ENCODE measurements at regions of chr15 and their contacts with region 1.

Region 1: DNA sequence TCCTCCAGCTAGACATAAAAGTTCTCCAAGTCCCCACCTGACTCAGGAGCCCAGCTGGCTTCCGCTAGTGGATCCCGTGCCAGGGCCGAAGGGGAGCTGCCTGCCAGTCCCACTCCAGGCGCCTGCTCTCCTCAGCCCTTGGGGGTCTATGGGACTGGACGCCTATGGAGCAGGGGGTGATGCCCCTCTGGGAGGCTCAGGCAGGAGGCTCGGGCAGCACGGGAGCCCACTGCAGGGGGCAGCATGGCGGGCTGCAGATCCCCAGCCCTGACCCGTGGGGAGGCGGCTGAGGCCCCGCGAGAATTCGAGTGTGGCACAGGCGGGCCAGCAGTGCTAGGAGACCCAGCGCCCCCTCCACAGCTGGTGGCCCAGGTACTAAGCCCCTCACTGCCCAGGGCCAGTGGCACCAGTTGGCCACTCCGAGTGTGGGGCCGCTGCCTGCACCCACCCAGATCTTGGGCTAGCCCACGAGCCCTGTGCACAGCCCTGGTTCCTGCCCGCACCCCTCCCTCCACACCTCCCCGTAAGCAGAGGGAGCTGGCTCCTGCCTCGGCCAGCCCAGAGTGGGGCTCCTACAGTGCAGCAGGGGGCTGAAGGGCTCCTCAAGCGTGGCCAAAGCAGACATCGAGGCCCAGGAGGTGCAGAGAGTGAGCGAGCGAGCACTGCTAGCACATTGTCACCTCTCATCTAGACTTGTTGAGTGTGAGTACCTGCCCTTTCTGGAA is 221.3 kb upstream of the NSMCE3 start:
- DNase-seq: no peak
- ATAC-seq: no peak
- H3K4me3 ChIP-seq: no peak overlapping the region
- H3K27ac ChIP-seq: no peak overlapping the region
- H3K4me1 ChIP-seq: no peaks in the 10 kb centered on the region
- H3K27me3 ChIP-seq: no peaks in the 10 kb centered on the region
- CTCF ChIP-seq: no peak

Region 2: GRCh38 chr15:29511663-29512062 is 20.8 kb after region 1 on chr15:
- CTCF ChIA-PET with region 1: no interaction called
- POLR2A ChIA-PET with region 1: no interaction called
- in situ Hi-C with region 1: no loop called
- intact Hi-C with region 1: loop called (anchors 2 kb)
- DNase-seq: no peak
- ATAC-seq: no peak
- H3K4me3 ChIP-seq: no peak overlapping the region
- H3K27ac ChIP-seq: no peak overlapping the region
- H3K4me1 ChIP-seq: no peaks in the 10 kb centered on the region
- H3K27me3 ChIP-seq: no peaks in the 10 kb centered on the region
- CTCF ChIP-seq: no peak

Region 3: GRCh38 chr15:29533667-29534066 is 42.8 kb after region 1 on chr15:
- CTCF ChIA-PET with region 1: no interaction called
- POLR2A ChIA-PET with region 1: no interaction called
- in situ Hi-C with region 1: no loop called
- intact Hi-C with region 1: no loop called
- DNase-seq: no peak
- ATAC-seq: no peak
- H3K4me3 ChIP-seq: no peak overlapping the region
- H3K27ac ChIP-seq: no peak overlapping the region
- H3K4me1 ChIP-seq: no peaks in the 10 kb centered on the region
- H3K27me3 ChIP-seq: no peaks in the 10 kb centered on the region
- CTCF ChIP-seq: no peak

Region 4: GRCh38 chr15:29568838-29569532 is 78.1 kb after region 1 on chr15:
- CTCF ChIA-PET with region 1: no interaction called
- POLR2A ChIA-PET with region 1: no interaction called
- in situ Hi-C with region 1: no loop called
- intact Hi-C with region 1: no loop called
- DNase-seq: no peak
- ATAC-seq: peak; percentile 87
- H3K4me3 ChIP-seq: no peak overlapping the region
- H3K27ac ChIP-seq: no peak overlapping the region
- H3K4me1 ChIP-seq: peaks cover 8% of the 10 kb centered on the region
- H3K27me3 ChIP-seq: peaks cover 35% of the 10 kb centered on the region
- CTCF ChIP-seq: peak; percentile 69

Region 5: GRCh38 chr15:29920515-29920914 is 429.6 kb after region 1 on chr15:
- CTCF ChIA-PET with region 1: no interaction called
- POLR2A ChIA-PET with region 1: no interaction called
- in situ Hi-C with region 1: no loop called
- intact Hi-C with region 1: no loop called
- DNase-seq: no peak
- ATAC-seq: no peak
- H3K4me3 ChIP-seq: no peak overlapping the region
- H3K27ac ChIP-seq: no peak overlapping the region
- H3K4me1 ChIP-seq: peaks cover 7% of the 10 kb centered on the region; the same call in 1 of the 2 replicates
- H3K27me3 ChIP-seq: no peaks in the 10 kb centered on the region
- CTCF ChIP-seq: no peak